Calu3 (cell line): ENCODE measurements at regions of chr12 and their contacts with region 1.

Region 1: DNA sequence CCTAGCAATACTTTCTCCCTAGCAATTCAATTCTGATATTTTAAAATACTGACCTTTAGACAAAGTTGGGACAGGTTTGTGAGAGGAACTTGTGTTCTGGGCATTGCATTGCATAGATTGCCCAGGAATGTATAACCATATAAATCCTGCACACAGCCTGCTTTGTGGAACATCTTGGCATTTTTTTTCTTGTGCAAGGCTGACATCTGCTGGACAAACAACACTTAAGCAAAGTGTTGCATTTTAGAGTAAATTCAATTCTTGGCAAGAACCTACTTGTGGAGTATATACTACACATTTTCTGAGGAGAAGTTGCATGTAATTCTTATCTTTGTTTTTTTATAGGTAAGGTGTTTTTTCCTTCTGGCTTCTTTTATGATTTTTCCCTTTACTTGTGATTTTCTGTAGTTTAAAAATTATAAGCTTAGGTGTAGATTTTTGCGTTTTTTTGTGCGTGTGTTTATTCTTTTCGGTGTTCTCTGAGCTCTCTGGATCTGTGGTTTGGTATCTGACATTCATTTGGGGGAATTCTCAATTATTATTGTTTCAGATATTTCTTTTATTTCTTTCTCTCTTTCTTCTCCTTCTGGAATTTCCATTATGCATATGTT is 26.4 kb downstream of the TESPA1 start:
- DNase-seq: peak; percentile 60
- H3K4me3 Mint-ChIP-seq: no peak overlapping the region
- H3K27ac Mint-ChIP-seq: no peak overlapping the region
- H3K4me1 Mint-ChIP-seq: no peaks in the 10 kb centered on the region
- H3K27me3 Mint-ChIP-seq: peaks cover 76% of the 10 kb centered on the region
- CTCF ChIP-seq: peak; percentile 56

Region 2: GRCh38 chr12:54596526-54596946 is 361.6 kb before region 1 on chr12:
- CTCF ChIA-PET with region 1: no interaction called
- intact Hi-C with region 1: loop called (anchors 1 kb)
- DNase-seq: peak; percentile 80
- H3K4me3 Mint-ChIP-seq: no peak overlapping the region
- H3K27ac Mint-ChIP-seq: no peak overlapping the region
- H3K4me1 Mint-ChIP-seq: no peaks in the 10 kb centered on the region
- H3K27me3 Mint-ChIP-seq: peaks cover 78% of the 10 kb centered on the region
- CTCF ChIP-seq: peak; percentile 83

Region 3: GRCh38 chr12:54650409-54650808 is 307.7 kb before region 1 on chr12:
- CTCF ChIA-PET with region 1: no interaction called
- intact Hi-C with region 1: no loop called
- DNase-seq: no peak
- H3K4me3 Mint-ChIP-seq: no peak overlapping the region
- H3K27ac Mint-ChIP-seq: no peak overlapping the region
- H3K4me1 Mint-ChIP-seq: no peaks in the 10 kb centered on the region
- H3K27me3 Mint-ChIP-seq: peaks cover 44% of the 10 kb centered on the region
- CTCF ChIP-seq: no peak

Region 4: DNA sequence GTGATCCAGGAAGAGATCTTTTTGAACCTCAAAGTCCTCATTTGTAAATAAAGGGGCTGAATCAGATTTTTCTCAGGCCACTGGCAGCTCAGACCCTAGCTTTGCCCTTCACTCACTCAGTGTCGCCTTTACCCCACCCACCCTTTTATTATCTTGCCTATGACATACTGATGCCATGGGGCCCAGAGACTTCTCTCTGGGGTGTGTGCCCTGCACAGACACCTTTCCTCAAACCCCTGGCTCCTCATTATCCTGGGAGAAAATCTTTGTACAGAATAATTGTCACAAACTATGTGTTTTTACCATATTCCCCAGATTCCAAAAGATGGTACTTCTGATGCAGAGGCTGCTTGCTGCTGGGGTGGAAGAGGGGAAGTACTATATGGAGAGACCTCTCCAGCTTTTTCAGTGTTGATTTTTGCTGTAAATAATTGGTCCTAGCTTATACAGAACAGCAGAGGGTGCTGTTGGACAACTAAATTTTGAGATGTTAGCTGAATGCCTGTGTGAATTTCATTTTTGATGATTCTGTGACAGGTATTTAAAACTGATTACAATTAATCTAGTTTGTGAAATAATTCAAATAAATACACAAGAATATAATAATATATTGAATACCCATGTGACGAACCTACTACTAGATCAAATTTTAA is 256.1 kb before region 1 on chr12:
- CTCF ChIA-PET with region 1: no interaction called
- intact Hi-C with region 1: loop called (anchors 1 kb)
- DNase-seq: peak; percentile 25
- H3K4me3 Mint-ChIP-seq: no peak overlapping the region
- H3K27ac Mint-ChIP-seq: no peak overlapping the region
- H3K4me1 Mint-ChIP-seq: no peaks in the 10 kb centered on the region
- H3K27me3 Mint-ChIP-seq: peaks cover 76% of the 10 kb centered on the region
- CTCF ChIP-seq: peak; percentile 50

Region 5: DNA sequence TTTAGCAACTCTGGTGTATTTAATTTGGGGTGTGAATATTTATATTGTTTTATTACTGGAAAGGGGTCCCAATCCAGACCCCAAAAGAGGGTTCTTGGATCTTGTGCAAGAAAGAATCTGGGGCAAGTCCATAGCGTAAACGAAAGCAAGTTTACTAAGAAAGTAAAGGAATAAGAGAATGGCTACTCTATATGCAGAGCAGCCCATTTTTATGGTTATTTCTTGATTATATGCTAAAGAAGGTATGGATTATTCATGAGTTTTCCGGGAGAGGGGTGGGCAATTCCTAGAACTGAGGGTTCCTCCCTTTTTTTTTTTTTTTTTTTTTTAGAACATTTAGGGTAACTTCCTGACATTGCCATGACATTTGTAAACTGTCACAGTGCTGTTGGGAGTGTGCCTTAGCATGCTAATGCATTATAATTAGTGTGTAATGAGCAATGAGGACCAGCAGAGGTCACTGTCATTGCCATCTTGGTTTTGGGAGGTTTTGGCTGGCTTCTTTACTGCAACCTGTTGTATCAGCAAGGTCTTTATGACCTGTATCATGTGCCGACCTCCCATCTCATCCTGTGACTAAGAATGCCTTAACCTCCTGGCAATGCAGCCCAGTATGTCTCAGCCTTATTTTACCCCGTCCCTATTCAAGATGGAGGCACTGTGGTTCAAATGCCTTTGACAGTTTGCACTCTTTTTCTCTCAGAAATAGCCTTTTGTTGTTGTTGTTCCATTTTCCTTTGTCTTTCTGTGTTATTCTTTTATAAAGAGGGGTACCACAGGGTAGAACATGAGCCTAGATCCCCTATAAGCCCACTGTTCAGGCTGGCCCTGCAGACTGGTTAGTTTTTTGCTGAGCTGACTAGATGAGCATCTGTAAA is 234.5 kb before region 1 on chr12:
- CTCF ChIA-PET with region 1: no interaction called
- intact Hi-C with region 1: loop called (anchors 1 kb)
- DNase-seq: peak; percentile 21
- H3K4me3 Mint-ChIP-seq: no peak overlapping the region
- H3K27ac Mint-ChIP-seq: no peak overlapping the region
- H3K4me1 Mint-ChIP-seq: no peaks in the 10 kb centered on the region
- H3K27me3 Mint-ChIP-seq: peaks cover 59% of the 10 kb centered on the region
- CTCF ChIP-seq: peak; percentile 57

Region 6: DNA sequence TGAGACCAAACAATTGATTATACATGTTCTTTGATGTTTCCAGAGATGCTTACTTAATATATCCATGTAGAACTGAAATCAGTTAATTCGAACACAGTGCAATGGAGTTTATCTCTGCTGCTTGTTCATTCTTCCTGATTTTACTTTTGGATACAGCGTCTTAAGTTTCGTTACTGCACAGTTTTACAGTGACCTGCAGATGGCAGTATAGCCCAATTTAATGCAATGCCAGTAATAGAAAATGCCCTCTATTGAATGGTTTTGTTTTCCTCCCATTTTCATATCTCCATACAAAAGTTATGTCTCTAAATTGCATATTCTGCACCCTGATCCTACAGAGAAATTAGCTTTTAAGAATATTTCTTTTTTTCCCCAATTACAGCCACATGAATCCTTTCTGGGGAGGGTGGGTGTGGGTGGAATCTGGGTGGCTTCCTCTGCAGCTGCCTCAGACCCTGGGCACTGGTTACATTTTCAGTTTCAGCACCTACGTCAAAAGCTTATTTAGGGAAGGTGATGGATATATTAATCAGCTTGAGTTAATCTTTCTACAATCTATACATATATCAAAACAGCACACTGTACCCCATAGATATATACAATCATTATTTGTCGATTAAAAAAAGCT is 208.8 kb before region 1 on chr12:
- CTCF ChIA-PET with region 1: interaction called, 6 read pairs
- intact Hi-C with region 1: loop called (anchors 1 kb)
- DNase-seq: peak; percentile 59
- H3K4me3 Mint-ChIP-seq: no peak overlapping the region
- H3K27ac Mint-ChIP-seq: no peak overlapping the region
- H3K4me1 Mint-ChIP-seq: no peaks in the 10 kb centered on the region
- H3K27me3 Mint-ChIP-seq: peaks cover 42% of the 10 kb centered on the region
- CTCF ChIP-seq: peak; percentile 78

Region 7: GRCh38 chr12:54759751-54760150 is 198.4 kb before region 1 on chr12:
- CTCF ChIA-PET with region 1: interaction called, 5 read pairs
- intact Hi-C with region 1: loop called (anchors 1 kb)
- DNase-seq: peak; percentile 50
- H3K4me3 Mint-ChIP-seq: no peak overlapping the region
- H3K27ac Mint-ChIP-seq: no peak overlapping the region
- H3K4me1 Mint-ChIP-seq: no peaks in the 10 kb centered on the region
- H3K27me3 Mint-ChIP-seq: peaks cover 16% of the 10 kb centered on the region
- CTCF ChIP-seq: peak; percentile 18

Region 8: DNA sequence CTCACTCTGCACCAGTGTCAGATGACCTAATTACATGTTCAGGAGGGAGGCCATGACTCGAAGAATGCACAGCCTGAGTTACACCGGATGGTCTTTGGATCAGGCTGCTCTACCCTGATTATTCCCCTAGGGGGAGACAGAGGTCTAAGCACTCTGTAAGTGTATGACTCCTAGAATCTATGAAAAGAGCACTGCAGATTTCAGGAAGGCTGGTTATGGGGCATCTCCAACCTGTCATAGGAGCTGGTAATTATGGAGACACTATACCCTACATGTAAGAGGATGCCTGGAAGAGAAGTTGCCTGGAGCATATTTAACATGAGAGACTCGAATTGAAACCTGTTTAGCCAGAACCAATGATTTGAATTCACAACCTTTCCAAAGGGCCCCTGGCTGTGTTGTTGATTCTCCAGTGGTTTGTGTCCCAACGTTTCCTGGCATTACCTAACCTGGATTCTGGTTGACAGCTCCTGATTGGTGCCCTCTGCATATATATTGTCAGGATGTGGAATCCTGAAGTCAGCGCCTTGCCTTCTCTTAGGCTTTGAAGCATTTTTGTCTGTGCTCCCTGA is 104.1 kb before region 1 on chr12 and contains the start of gene MUCL1:
- CTCF ChIA-PET with region 1: interaction called, 4 read pairs
- intact Hi-C with region 1: loop called (anchors 1 kb)
- DNase-seq: peak; percentile 83
- H3K4me3 Mint-ChIP-seq: no peak within 1 kb of the TSS
- H3K27ac Mint-ChIP-seq: no peak within 1 kb of the TSS
- H3K4me1 Mint-ChIP-seq: no peaks in the 10 kb centered on the region
- H3K27me3 Mint-ChIP-seq: peaks cover 72% of the 10 kb centered on the region
- CTCF ChIP-seq: peak; percentile 82
- total RNA-seq, gene MUCL1: not detected in 2 replicates

Region 9: GRCh38 chr12:54926246-54926645 is 31.9 kb before region 1 on chr12:
- CTCF ChIA-PET with region 1: no interaction called
- intact Hi-C with region 1: no loop called
- DNase-seq: no peak
- H3K4me3 Mint-ChIP-seq: no peak overlapping the region
- H3K27ac Mint-ChIP-seq: no peak overlapping the region
- H3K4me1 Mint-ChIP-seq: no peaks in the 10 kb centered on the region
- H3K27me3 Mint-ChIP-seq: no peaks in the 10 kb centered on the region
- CTCF ChIP-seq: no peak

Region 10: DNA sequence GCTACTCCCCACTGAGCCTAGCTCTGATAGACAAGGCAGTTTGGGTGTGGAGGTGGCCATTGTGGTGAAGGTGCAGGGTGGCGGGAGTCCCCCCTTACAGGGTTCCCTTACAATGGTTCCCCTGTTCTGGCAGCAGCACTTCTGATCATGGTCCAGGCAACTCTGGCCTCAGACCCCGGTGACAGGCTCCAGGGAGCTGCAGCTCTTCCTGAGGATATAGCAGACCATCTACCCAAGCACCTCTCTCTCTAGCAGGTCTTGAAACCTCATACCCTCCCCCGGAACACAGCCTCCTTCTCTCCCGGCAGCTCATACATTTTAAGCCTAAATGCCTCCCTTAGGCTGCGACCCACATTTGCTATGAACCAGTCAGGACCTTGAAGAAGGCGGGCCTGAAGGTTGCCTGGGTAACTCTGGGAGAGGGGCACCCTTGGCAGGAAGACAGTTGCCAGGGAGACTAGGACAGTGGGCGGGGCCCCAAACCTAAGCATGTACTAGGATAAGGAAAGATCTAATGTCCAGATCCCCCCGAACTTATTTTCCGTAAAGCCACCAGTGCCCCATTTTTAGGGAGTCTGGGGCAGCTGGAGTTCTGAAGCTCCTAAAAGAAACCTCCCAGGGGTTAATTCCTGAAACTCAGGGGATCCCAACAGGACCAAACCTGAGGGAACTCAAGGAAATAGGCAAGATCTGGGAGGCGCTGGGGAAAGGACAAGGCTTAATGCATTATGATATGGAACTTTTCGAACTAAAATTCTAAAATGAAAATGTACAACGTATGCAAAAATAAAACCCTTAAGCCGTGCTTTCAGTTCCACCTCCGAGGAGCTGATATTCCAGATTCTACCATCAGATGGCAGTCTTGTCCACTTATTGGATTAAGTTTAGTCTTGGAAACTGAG is 780.2 kb after region 1 on chr12:
- CTCF ChIA-PET with region 1: no interaction called
- intact Hi-C with region 1: no loop called
- DNase-seq: peak; percentile 86
- H3K4me3 Mint-ChIP-seq: peak overlapping the region; percentile 68
- H3K27ac Mint-ChIP-seq: peak overlapping the region; percentile 42
- H3K4me1 Mint-ChIP-seq: peaks cover 35% of the 10 kb centered on the region
- H3K27me3 Mint-ChIP-seq: peaks cover 21% of the 10 kb centered on the region
- CTCF ChIP-seq: peak; percentile 55